GM10248 (cell line): ENCODE measurements at regions of chr16 and their contacts with region 1.

Region 1: DNA sequence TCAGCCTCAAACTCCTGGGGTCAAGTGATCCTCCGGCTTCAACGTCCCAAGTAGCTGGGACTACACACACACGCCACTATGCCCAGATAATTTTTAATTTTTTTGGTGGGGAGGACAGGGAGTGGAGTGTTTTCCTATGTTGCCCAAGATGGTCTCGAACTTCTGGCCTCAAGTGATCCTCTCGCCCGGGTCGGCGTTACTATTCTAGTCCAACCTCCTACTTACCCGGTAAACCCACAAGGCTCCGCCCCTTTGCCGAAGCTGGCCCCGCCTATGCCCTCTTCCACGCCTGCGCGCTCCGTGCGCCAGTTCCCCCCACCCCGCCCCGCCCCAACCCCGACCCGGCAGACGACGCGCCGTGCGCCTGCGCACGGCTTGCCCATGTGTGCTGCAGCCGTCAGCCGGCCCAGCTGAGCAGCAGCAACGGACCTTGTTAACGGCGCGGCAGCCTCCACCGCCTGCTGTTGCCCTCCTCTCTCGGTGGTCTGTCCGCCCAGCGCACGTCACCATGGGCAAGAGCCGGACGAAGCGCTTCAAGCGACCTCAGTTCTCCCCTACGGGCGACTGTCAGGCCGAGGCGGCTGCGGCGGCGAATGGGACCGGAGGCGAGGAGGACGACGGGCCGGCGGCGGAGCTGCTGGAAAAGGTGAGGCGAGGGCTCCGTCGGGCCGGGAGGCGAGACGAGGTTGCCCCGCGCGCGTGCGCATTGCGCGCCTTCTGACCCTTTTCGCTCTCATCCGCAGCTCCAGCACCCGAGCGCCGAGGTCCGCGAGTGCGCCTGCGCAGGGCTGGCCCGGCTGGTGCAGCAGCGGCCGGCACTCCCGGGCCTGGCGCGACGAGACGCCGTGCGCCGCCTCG is at the start of gene HEATR3:
- DNase-seq: peak; percentile 94
- CTCF ChIP-seq: no peak

Region 2: GRCh38 chr16:49776085-49776595 is 289.7 kb before region 1 on chr16:
- CTCF ChIA-PET with region 1: no interaction called
- POLR2A ChIA-PET with region 1: no interaction called
- DNase-seq: no peak
- CTCF ChIP-seq: no peak

Region 3: DNA sequence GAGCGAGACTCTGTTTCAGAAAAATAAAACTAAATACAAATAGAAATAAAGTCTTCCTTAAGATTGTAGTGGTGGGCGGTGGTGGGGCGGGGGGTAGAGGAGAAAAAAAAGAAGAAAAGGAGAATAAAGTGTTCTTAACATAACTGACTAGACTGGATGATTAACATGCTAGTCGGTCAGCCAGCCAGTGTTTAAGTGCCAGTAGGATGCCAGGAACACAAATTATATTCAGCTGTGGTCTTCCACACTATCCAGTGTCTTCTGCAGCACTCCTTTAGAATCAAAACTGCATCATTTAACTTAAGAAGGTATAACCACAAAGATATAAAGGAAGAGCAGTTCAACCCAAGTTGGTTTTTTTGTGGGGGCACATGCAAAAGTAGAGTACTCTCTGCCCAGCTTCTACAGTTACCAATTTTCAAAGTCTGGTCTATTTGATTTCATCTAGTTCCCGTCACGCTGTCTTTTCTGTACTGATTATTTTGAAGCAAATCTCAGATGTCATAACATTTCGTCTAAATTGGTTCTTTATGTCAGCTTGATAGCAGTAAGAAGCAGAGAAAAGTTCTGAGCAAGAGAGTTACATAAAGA is 15.7 kb after region 1 on chr16:
- CTCF ChIA-PET with region 1: interaction called, 22 read pairs
- POLR2A ChIA-PET with region 1: interaction called, 6 read pairs
- DNase-seq: no peak
- CTCF ChIP-seq: no peak

Region 4: GRCh38 chr16:50088302-50088701 is 22.4 kb after region 1 on chr16:
- CTCF ChIA-PET with region 1: interaction called, 22 read pairs
- POLR2A ChIA-PET with region 1: interaction called, 6 read pairs
- DNase-seq: no peak
- CTCF ChIP-seq: no peak

Region 5: GRCh38 chr16:50121721-50122445 is 56.0 kb after region 1 on chr16:
- CTCF ChIA-PET with region 1: interaction called, 27 read pairs
- POLR2A ChIA-PET with region 1: interaction called, 3 read pairs
- DNase-seq: peak; percentile 41
- CTCF ChIP-seq: no peak

Region 6: DNA sequence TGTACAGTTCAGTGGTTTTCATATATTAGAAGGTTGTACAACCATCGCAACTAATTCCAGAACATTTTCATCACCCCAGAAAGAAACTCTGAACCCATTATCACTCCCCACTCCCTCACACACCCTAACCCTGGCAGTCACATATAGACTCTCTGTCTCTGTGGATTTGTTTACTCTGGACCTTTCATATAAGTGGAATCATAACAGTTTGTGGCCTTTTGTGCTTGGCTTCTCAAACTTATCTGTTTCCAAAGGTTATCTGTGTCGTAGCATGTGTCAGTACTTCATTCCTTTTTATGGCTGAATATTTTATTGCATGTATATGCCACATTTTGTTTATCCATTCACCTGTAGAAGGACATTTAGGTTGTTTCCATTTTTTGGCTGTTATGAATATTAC is 99.6 kb after region 1 on chr16:
- CTCF ChIA-PET with region 1: no interaction called
- POLR2A ChIA-PET with region 1: no interaction called
- DNase-seq: no peak
- CTCF ChIP-seq: no peak

Region 7: DNA sequence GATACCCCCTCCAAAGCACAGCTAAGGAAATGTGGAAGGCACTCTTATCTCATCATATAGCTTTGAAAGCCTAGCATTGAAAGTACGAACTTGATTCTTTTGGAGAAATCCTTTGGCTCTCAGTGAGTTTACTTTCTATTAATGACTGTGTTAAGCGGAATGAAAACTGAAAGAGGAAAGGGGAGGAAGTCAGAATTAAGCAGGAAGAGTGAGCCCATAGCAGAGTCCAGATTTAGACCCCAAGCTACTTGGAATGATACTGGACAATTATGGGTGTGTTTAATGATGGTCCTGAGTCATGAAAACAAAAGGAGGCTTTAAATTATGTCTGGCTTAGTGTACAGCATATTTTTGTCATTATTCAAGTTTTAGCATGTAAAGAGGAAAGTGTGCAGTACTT is 129.4 kb after region 1 on chr16:
- CTCF ChIA-PET with region 1: interaction called, 20 read pairs
- POLR2A ChIA-PET with region 1: no interaction called
- DNase-seq: no peak
- CTCF ChIP-seq: no peak

Region 8: DNA sequence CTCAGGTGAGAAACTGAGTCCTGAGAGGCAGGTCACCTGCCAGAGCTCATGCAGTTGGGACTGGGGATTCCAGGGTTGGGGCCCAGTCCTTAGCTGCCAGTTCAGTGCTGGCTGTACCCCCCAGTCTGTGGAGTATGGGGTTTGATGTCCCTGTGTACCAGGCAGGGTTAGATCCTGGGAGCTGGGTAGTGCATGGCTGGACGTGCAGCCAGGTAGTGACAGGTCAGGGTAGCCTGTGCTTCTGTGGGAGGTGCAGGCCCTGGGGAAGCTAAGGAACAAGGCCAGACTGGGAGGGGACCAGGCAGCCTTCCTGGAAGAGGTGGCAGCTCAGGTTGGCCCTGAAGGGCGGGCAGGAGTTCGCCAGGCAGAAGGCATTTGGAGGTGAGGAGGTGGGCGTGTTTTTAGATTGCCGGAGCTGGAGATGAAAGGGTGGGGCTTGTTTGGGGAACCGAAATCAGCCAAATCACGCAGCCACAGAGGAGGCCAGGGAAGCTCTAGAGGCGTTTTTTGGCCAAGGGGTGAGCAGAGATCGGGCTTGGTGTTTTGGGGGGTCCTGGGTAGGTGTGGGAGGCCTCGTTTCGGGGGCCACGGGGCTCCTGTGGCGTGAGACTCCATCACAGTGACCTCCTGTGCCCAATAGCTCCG is 207.9 kb after region 1 on chr16:
- CTCF ChIA-PET with region 1: interaction called, 12 read pairs
- POLR2A ChIA-PET with region 1: no interaction called
- DNase-seq: peak; percentile 88
- CTCF ChIP-seq: no peak